Sigmoid colon (tissue), 7 donors: ENCODE measurements at regions of chr3 and their contacts with region 1.

Region 1: DNA sequence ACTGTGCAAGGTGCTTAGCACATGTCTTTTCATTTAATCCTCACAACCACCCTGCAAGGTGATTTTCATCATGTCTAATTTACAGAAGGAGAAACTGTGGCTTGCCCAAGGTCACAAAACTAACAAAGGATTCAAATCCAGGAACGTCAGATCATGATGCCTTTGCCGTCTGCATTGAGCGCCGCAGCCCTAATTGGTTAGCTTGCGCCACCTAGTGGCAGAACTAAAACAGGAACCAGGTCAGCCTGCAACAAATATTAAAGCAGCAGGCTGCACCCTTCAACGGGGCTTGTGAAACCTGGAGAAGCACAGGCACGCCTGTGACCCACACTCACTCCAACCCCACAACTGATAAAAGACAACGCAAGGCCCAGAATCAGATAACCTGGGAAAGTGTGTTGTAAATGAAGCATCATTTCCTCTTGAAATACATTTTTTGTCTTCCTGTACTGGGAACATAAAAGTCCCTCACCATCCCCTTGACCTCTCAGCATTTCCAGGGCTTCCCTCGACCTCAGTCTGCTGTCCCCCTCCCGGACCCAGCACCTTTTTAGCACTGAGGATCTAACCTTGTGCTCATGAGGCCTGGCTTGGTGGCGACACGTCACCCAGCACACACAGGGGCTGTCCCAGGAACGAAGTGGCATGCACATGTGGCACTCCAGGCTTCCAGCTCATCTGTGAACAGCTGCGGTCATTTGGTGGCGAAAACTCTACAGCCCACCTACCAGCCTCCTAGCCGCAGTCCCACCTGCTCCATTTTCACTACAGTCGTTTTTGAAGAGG is 17.3 kb downstream of the DPH3 start:
- DNase-seq: peak; percentile 87
- H3K4me3 ChIP-seq: no peak overlapping the region
- H3K27ac ChIP-seq: no peak overlapping the region
- H3K4me1 ChIP-seq: peaks cover 0 to 19% (median 4%) of the 10 kb centered on the region in 4 donors
- H3K27me3 ChIP-seq: no peaks in the 10 kb centered on the region
- CTCF ChIP-seq: peak; percentile 78 to 96 (median 82)
- EP300 ChIP-seq: no peak
- POLR2A ChIP-seq: no peak

Region 2: DNA sequence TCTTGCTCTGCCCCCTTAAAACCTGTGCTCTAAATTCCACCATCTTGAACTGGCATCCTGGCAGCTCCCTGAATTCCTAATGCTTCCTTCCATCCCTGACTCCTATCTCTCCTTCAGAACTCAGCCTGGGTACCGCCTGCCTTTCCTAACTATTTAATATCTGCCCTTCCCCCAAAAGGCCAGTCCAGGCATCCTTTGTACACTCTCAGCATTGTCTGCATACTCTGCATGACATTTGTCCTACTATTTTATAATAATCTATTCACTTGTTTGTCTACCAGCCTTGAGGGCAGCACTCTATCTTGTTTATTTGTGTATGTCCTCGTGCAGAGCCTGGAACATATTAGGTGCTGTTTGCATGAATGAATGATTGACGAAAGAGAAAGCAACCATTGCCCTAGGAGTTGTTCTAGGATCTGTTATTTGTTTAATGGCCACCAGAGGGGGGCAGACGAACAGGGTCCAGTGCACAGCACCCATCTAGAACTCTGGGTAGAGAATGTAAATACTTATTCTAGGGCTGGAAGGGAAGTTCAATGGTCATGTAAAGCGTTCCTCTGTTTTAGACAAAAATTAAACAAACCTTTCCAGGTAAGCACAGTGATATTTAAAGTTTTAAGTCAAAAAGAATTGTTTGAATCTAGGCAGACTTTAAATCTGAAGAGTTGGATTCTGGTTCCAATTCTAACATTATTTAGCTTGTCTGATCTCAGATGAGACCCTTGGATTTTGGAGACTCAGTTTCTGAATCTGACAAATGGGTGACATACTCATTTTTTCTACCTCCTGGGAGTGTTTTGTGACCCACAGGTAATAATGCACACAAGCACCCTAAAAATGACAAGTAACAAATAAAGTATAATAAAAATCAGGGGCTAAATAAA is 198.8 kb before region 1 on chr3:
- intact Hi-C with region 1: loop called (anchors 1 kb)
- DNase-seq: peak; percentile 82
- H3K4me3 ChIP-seq: no peak overlapping the region
- H3K27ac ChIP-seq: no peak overlapping the region
- H3K4me1 ChIP-seq: peaks cover 0 to 5% (median 2%) of the 10 kb centered on the region in 4 donors
- H3K27me3 ChIP-seq: no peaks in the 10 kb centered on the region
- CTCF ChIP-seq: peak; percentile 74 to 86 (median 76)
- EP300 ChIP-seq: no peak
- POLR2A ChIP-seq: no peak